Posterior cingulate gyrus (tissue), 11 donors: ENCODE measurements at regions of chr1 and their contacts with region 1.

Region 1: GRCh38 chr1:51044834-51045233 is 57.2 kb upstream of the C1orf185 start:
- DNase-seq: no peak

Region 2: GRCh38 chr1:50774759-50775351 is 270.0 kb before region 1 on chr1:
- intact Hi-C with region 1: loop called (anchors 2 kb)
- DNase-seq: no peak